ENCODE measurements at regions of chr2 and their contacts with region 1.

Region 1: DNA sequence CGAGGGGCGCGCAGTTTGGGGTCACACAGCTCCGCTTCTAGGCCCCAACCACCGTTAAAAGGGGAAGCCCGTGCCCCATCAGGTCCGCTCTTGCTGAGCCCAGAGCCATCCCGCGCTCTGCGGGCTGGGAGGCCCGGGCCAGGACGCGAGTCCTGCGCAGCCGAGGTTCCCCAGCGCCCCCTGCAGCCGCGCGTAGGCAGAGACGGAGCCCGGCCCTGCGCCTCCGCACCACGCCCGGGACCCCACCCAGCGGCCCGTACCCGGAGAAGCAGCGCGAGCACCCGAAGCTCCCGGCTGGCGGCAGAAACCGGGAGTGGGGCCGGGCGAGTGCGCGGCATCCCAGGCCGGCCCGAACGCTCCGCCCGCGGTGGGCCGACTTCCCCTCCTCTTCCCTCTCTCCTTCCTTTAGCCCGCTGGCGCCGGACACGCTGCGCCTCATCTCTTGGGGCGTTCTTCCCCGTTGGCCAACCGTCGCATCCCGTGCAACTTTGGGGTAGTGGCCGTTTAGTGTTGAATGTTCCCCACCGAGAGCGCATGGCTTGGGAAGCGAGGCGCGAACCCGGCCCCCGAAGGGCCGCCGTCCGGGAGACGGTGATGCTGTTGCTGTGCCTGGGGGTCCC is at the start of gene ITGA4:
- DNase-seq: peak; percentile 65
- ATAC-seq: peak; percentile 97
- H3K4me3 ChIP-seq: peak within 1 kb of the TSS; percentile 75
- H3K27ac ChIP-seq: peak within 1 kb of the TSS; percentile 60; the same call in 1 of the 2 replicates
- H3K4me1 ChIP-seq: 0 out of 2 replicates have a peak, but pooled peaks cover 2% of the 10 kb centered on the region
- H3K27me3 ChIP-seq: no peaks in the 10 kb centered on the region; the same call in 1 of the 2 replicates
- CTCF ChIP-seq: peak; percentile 77
- POLR2A ChIP-seq: no peak
- RAD21 ChIP-seq: peak; percentile 67
- total RNA-seq, gene ITGA4: 13.6 and 20.6 TPM in 2 replicates

Region 2: GRCh38 chr2:180952082-180952481 is 505.1 kb before region 1 on chr2:
- CTCF ChIA-PET with region 1: no interaction called
- POLR2A ChIA-PET with region 1: no interaction called
- dilution Hi-C with region 1: no loop called
- in situ Hi-C with region 1: no loop called
- intact Hi-C with region 1: no loop called
- DNase-seq: no peak
- ATAC-seq: no peak
- H3K4me3 ChIP-seq: no peak overlapping the region
- H3K27ac ChIP-seq: no peak overlapping the region
- H3K4me1 ChIP-seq: no peaks in the 10 kb centered on the region
- H3K27me3 ChIP-seq: no peaks in the 10 kb centered on the region
- CTCF ChIP-seq: no peak
- POLR2A ChIP-seq: no peak
- RAD21 ChIP-seq: no peak

Region 3: GRCh38 chr2:181117206-181117925 is 339.9 kb before region 1 on chr2:
- CTCF ChIA-PET with region 1: interaction called, 4 read pairs
- POLR2A ChIA-PET with region 1: no interaction called
- dilution Hi-C with region 1: no loop called
- in situ Hi-C with region 1: loop called (anchors 10 kb)
- intact Hi-C with region 1: no loop called
- DNase-seq: no peak
- ATAC-seq: no peak
- H3K4me3 ChIP-seq: no peak overlapping the region
- H3K27ac ChIP-seq: no peak overlapping the region
- H3K4me1 ChIP-seq: no peaks in the 10 kb centered on the region
- H3K27me3 ChIP-seq: no peaks in the 10 kb centered on the region
- CTCF ChIP-seq: no peak
- POLR2A ChIP-seq: no peak
- RAD21 ChIP-seq: no peak

Region 4: GRCh38 chr2:181594322-181594721 is 137.1 kb after region 1 on chr2:
- CTCF ChIA-PET with region 1: no interaction called
- POLR2A ChIA-PET with region 1: no interaction called
- dilution Hi-C with region 1: no loop called
- in situ Hi-C with region 1: no loop called
- intact Hi-C with region 1: no loop called
- DNase-seq: no peak
- ATAC-seq: no peak
- H3K4me3 ChIP-seq: no peak overlapping the region
- H3K27ac ChIP-seq: no peak overlapping the region
- H3K4me1 ChIP-seq: no peaks in the 10 kb centered on the region
- H3K27me3 ChIP-seq: peaks cover 2% of the 10 kb centered on the region; the same call in 1 of the 2 replicates
- CTCF ChIP-seq: no peak
- POLR2A ChIP-seq: no peak
- RAD21 ChIP-seq: no peak

Region 5: GRCh38 chr2:181924336-181924735 is 467.1 kb after region 1 on chr2:
- CTCF ChIA-PET with region 1: no interaction called
- POLR2A ChIA-PET with region 1: no interaction called
- dilution Hi-C with region 1: no loop called
- in situ Hi-C with region 1: no loop called
- intact Hi-C with region 1: no loop called
- DNase-seq: no peak
- ATAC-seq: no peak
- H3K4me3 ChIP-seq: no peak overlapping the region
- H3K27ac ChIP-seq: no peak overlapping the region
- H3K4me1 ChIP-seq: no peaks in the 10 kb centered on the region
- H3K27me3 ChIP-seq: no peaks in the 10 kb centered on the region
- CTCF ChIP-seq: no peak
- POLR2A ChIP-seq: no peak
- RAD21 ChIP-seq: no peak

Region 6: GRCh38 chr2:181937473-181937872 is 480.2 kb after region 1 on chr2:
- CTCF ChIA-PET with region 1: no interaction called
- POLR2A ChIA-PET with region 1: interaction called, 11 read pairs
- dilution Hi-C with region 1: no loop called
- in situ Hi-C with region 1: no loop called
- intact Hi-C with region 1: no loop called
- DNase-seq: peak; percentile 61
- ATAC-seq: peak; percentile 83
- H3K4me3 ChIP-seq: no peak overlapping the region
- H3K27ac ChIP-seq: no peak overlapping the region
- H3K4me1 ChIP-seq: no peaks in the 10 kb centered on the region
- H3K27me3 ChIP-seq: no peaks in the 10 kb centered on the region
- CTCF ChIP-seq: no peak
- POLR2A ChIP-seq: no peak
- RAD21 ChIP-seq: no peak

Region 7: DNA sequence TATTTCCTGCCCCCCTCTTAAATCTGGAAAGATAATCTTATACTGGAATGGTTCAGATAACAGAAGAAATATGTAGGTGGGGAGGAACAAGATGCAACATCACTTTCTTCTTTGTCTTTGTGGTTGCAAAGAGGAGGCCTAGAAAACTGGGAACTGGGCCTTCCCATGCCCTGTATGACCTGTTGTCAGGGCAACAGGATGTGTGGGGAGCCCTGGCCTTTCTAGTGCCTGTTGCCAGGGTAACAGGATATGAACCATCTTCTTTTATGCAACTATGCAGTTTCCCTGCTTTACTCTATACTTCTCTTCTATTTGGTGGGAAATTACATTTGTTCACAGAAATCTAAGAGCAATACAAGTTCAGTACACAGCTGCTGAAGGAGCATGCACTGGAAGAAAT is 1049.4 kb after region 1 on chr2:
- CTCF ChIA-PET with region 1: no interaction called
- POLR2A ChIA-PET with region 1: no interaction called
- dilution Hi-C with region 1: no loop called
- in situ Hi-C with region 1: no loop called
- intact Hi-C with region 1: no loop called
- DNase-seq: peak; percentile 65
- ATAC-seq: no peak
- H3K4me3 ChIP-seq: no peak overlapping the region
- H3K27ac ChIP-seq: no peak overlapping the region
- H3K4me1 ChIP-seq: peaks cover 7% of the 10 kb centered on the region
- H3K27me3 ChIP-seq: no peaks in the 10 kb centered on the region
- CTCF ChIP-seq: no peak
- POLR2A ChIP-seq: no peak
- RAD21 ChIP-seq: no peak

Measured in IMR-90 (cell line).